Naive thymus-derived CD4-positive, alpha-beta T cell (primary cell): ENCODE measurements at regions of chr5 and their contacts with region 1.

Region 1: DNA sequence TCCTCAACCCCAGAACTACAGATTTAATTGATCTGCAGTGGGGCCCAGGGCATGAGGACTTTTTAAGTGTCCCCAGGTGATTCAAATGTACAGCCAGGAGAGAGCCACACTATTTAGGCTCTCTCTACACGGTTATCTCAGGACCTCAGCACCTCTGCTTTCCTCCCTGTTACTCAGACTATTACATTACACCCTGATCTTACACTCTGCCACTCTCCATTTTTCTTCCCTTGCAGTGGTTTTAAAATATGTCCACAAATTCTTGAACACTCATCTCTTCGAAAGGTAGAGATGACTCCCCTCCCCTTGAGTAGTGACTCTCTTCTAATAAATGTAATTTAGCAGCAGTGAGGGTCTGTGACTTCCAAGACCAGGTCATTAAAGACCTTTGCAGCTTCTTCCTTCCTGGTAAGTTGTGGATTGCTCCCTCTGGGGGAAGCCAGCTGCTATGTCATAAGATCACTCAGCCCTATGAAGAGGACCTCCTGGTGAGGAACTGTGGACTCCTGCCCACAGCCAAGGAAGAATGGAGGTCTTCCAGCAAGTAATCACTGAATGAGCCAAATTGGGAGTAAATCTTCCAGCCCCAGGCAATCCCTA is 87.5 kb upstream of the SSBP2 start:
- DNase-seq: peak in 6 of 9 donors; percentile 24 to 50 (median 41)
- ATAC-seq: peak; percentile 87
- H3K4me3 ChIP-seq: no peak overlapping the region
- H3K4me3 Mint-ChIP-seq: no peak overlapping the region
- H3K27ac ChIP-seq: no peak overlapping the region
- H3K27ac Mint-ChIP-seq: peak overlapping the region in 4 of 9 donors; percentile 1 to 51 (median 6)
- H3K4me1 ChIP-seq: peaks cover 0 to 8% of the 10 kb centered on the region in 2 donors
- H3K4me1 Mint-ChIP-seq: peaks cover 4 to 12% (median 8%) of the 10 kb centered on the region in 7 donors
- H3K27me3 ChIP-seq: no peaks in the 10 kb centered on the region
- H3K27me3 Mint-ChIP-seq: peaks cover 0 to 3% (median 0%) of the 10 kb centered on the region in 5 donors

Region 2: DNA sequence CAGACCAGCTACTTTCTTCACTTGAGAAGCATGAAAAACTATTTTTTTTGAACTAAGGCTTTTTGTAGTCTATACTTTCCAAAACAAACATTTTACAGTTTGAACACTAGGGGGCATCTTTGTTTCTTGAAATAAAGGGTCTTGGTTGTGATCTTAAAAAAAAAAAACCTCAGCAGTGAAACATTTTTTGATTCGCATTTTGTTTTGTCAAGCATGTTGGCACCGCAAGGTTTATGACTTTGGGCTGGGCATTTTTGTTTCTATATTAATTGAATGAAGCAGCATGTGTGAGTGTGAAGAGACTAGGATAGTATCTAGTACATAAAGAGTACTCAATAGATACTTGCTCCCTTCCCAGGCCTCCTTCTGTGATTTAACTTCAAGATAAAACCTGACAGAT is 412.8 kb before region 1 on chr5:
- CTCF ChIA-PET with region 1: interaction called, 3 read pairs
- POLR2A ChIA-PET with region 1: no interaction called
- intact Hi-C with region 1: loop called in 1 of 2 experiments (anchors 1 kb)
- DNase-seq: peak in 7 of 9 donors; percentile 15 to 72 (median 58)
- ATAC-seq: peak; percentile 73
- H3K4me3 ChIP-seq: no peak overlapping the region
- H3K4me3 Mint-ChIP-seq: peak overlapping the region in 2 of 10 donors; percentile 6 to 8
- H3K27ac ChIP-seq: no peak overlapping the region
- H3K27ac Mint-ChIP-seq: peak overlapping the region in 6 of 9 donors; percentile 9 to 65 (median 48)
- H3K4me1 ChIP-seq: peaks cover 0 to 6% of the 10 kb centered on the region in 2 donors
- H3K4me1 Mint-ChIP-seq: peaks cover 3 to 25% (median 13%) of the 10 kb centered on the region in 7 donors
- H3K27me3 ChIP-seq: no peaks in the 10 kb centered on the region
- H3K27me3 Mint-ChIP-seq: no peaks in the 10 kb centered on the region

Region 3: GRCh38 chr5:81513982-81514381 is 324.4 kb before region 1 on chr5:
- CTCF ChIA-PET with region 1: interaction called, 4 read pairs
- POLR2A ChIA-PET with region 1: no interaction called
- intact Hi-C with region 1: loop called in 1 of 2 experiments (anchors 1 kb)
- DNase-seq: peak in 4 of 9 donors; percentile 20 to 32 (median 22)
- ATAC-seq: peak; percentile 55
- H3K4me3 ChIP-seq: no peak overlapping the region
- H3K4me3 Mint-ChIP-seq: no peak overlapping the region
- H3K27ac ChIP-seq: no peak overlapping the region
- H3K27ac Mint-ChIP-seq: peak overlapping the region in 2 of 9 donors; percentile 8 to 18
- H3K4me1 ChIP-seq: no peaks in the 10 kb centered on the region
- H3K4me1 Mint-ChIP-seq: peaks cover 0 to 24% (median 6%) of the 10 kb centered on the region in 7 donors
- H3K27me3 ChIP-seq: no peaks in the 10 kb centered on the region
- H3K27me3 Mint-ChIP-seq: no peaks in the 10 kb centered on the region

Region 4: DNA sequence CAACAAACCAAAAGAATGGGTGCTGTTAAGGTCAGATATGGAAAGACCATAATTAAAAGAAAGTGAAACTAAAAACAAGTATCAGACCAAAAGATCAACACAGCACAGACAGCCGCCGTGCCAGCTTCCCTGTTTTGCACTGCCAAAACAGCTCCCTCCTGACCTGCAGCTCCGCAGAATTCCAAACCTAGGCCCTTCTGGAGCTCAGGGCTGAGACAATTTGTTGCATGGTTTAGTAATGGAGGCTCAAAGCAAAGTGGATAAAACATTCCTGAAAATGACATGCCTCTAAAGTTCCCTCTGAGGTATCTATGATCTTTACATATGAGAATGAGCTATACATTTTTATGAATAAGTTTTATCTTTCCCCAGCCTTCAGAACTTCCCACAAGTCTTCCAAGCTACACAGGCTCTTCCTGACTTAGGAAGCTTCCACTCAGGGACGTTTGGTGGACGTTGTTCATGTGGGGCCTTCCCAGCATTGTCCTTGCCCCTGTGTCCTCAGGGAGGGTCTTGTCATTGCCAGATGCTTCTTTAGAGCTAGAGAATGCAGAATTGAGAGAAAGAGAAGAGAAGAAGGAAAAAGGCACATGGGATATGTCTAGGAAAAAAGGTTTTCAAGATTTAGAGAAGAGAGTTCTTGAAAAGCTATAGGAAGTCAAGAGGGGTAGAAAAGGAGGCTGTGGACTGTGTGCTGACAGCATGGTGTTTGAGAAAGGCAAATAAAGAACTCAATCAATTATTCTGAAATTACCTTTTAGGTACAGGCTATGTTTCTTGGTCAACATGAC is 59.1 kb before region 1 on chr5:
- CTCF ChIA-PET with region 1: no interaction called
- POLR2A ChIA-PET with region 1: interaction called, 3 read pairs
- intact Hi-C with region 1: loop called in 1 of 2 experiments (anchors 2 kb)
- DNase-seq: peak in 8 of 9 donors; percentile 14 to 48 (median 36)
- ATAC-seq: peak; percentile 74
- H3K4me3 ChIP-seq: peak overlapping the region; percentile 51
- H3K4me3 Mint-ChIP-seq: peak overlapping the region; percentile 82 to 92 (median 88)
- H3K27ac ChIP-seq: peak overlapping the region; percentile 70
- H3K27ac Mint-ChIP-seq: peak overlapping the region; percentile 94 to 100 (median 95)
- H3K4me1 ChIP-seq: peaks cover 5 to 9% of the 10 kb centered on the region in 2 donors
- H3K4me1 Mint-ChIP-seq: peaks cover 9 to 35% (median 29%) of the 10 kb centered on the region in 7 donors
- H3K27me3 ChIP-seq: no peaks in the 10 kb centered on the region
- H3K27me3 Mint-ChIP-seq: no peaks in the 10 kb centered on the region

Region 5: GRCh38 chr5:82165740-82166530 is 327.5 kb after region 1 on chr5:
- CTCF ChIA-PET with region 1: interaction called, 5 read pairs
- POLR2A ChIA-PET with region 1: no interaction called
- intact Hi-C with region 1: loop called in 1 of 2 experiments (anchors 5 kb)
- DNase-seq: peak in 7 of 9 donors; percentile 39 to 70 (median 58)
- ATAC-seq: peak; percentile 96
- H3K4me3 ChIP-seq: no peak overlapping the region
- H3K4me3 Mint-ChIP-seq: no peak overlapping the region
- H3K27ac ChIP-seq: no peak overlapping the region
- H3K27ac Mint-ChIP-seq: peak overlapping the region in 6 of 9 donors; percentile 3 to 65 (median 17)
- H3K4me1 ChIP-seq: no peaks in the 10 kb centered on the region
- H3K4me1 Mint-ChIP-seq: peaks cover 0 to 12% (median 7%) of the 10 kb centered on the region in 7 donors
- H3K27me3 ChIP-seq: no peaks in the 10 kb centered on the region
- H3K27me3 Mint-ChIP-seq: no peaks in the 10 kb centered on the region